K562 (cell line): ENCODE measurements at regions of chr11 and their contacts with region 1.

Region 1: DNA sequence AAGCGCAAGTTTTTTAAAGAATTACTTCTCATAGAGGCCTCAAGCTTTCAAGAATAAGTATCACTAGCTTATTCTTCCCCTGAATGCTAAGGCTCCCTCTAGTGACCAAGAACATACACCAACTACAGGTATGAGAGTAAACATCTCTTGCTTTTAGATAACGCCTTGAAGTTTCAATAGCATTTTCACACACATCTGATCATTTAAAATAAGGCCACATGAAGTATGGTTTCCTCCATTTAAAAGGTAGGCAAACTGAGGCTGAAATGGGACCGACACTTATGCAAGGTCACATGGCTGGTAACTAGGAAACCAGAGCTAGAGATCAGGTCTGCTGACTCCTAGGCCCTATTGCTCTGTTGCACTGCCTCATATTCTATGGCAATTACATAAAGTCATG is 66.5 kb downstream of the CCDC34 start:
- DNase-seq: peak; percentile 22 to 67 (median 38)
- ATAC-seq: peak; percentile 95
- H3K4me3 ChIP-seq: no peak overlapping the region
- H3K27ac ChIP-seq: no peak overlapping the region
- H3K4me1 ChIP-seq: no peaks in the 10 kb centered on the region
- H3K27me3 ChIP-seq: no peaks in the 10 kb centered on the region
- CTCF ChIP-seq: peak; percentile 52 to 81 (median 64); a peak in 5 of 6 replicates
- EP300 ChIP-seq: no peak
- POLR2A ChIP-seq: no peak
- RAD21 ChIP-seq: peak; percentile 82 to 87

Region 2: DNA sequence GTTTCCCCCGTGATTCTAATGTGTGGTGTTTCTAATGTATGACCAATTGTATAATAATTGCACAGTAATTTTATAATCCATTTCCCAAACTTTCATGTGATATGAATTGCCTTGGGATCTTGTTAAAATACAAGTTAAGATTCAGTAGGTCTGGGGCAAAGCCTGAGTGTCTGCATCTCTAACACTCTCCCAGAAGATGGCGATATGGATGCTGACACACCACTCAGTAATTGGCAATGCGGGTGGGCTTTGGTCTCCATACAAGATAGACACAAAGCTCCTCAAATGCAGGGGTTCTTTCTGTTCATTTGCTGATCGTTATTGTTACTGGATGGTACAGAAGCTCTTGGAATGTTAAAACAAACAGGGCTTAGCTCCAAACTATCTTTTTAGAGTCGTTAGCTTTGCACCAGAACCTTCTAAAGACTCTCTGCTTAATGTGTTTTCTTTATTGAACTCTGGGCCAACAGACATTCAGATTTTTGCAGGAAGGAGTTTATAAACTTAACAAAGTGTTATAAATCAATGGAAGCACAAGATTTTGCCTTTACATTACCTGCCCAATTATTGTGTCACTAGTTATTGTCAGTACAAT is 1009.9 kb before region 1 on chr11:
- CTCF ChIA-PET with region 1: no interaction called
- POLR2A ChIA-PET with region 1: no interaction called
- in situ Hi-C with region 1: no loop called
- intact Hi-C with region 1: loop called (anchors 10 kb)
- DNase-seq: peak in 1 of 4 experiments; percentile 5
- ATAC-seq: 0 out of 3 replicates have a peak, but pooled peaks have one; percentile 48
- H3K4me3 ChIP-seq: no peak overlapping the region
- H3K27ac ChIP-seq: no peak overlapping the region
- H3K4me1 ChIP-seq: no peaks in the 10 kb centered on the region
- H3K27me3 ChIP-seq: no peaks in the 10 kb centered on the region
- CTCF ChIP-seq: peak; percentile 11 to 39 (median 17); a peak in 2 of 6 replicates
- EP300 ChIP-seq: no peak
- POLR2A ChIP-seq: no peak
- RAD21 ChIP-seq: 0 out of 4 replicates have a peak, but pooled peaks of 1 of the 2 experiments have one; percentile 5

Region 3: DNA sequence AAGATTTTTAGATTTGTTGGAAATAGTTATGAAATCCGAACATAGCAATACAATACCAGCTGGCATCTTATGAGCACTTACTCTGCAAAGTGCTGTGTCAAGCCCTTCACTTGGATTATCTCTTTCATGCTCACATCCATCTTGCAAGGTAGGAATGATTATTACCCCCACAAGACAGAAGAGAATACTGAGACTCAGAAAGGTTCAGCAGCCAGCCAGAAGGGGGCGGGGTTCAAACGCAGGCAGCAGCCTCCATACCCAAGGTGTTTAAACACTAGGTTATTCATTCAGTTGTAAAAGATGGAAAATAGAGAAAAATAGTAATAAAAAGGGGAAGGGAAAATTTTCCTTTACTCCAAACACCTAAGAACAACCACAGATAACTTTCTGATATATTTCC is 92.0 kb before region 1 on chr11:
- CTCF ChIA-PET with region 1: no interaction called
- POLR2A ChIA-PET with region 1: no interaction called
- in situ Hi-C with region 1: no loop called
- intact Hi-C with region 1: loop called (anchors 1 kb)
- DNase-seq: peak in 3 of 4 experiments; percentile 32 to 61 (median 35)
- ATAC-seq: peak; percentile 59
- H3K4me3 ChIP-seq: no peak overlapping the region
- H3K27ac ChIP-seq: no peak overlapping the region
- H3K4me1 ChIP-seq: peaks cover 13 to 53% of the 10 kb centered on the region in 2 experiments; a peak in 4 of 5 replicates
- H3K27me3 ChIP-seq: no peaks in the 10 kb centered on the region
- CTCF ChIP-seq: peak; percentile 40 to 58 (median 52); a peak in 5 of 6 replicates
- EP300 ChIP-seq: no peak
- POLR2A ChIP-seq: no peak
- RAD21 ChIP-seq: peak; percentile 27 to 58; a peak in 2 of 4 replicates